ENCODE measurements at regions of chr15 and their contacts with region 1.

Region 1: GRCh38 chr15:72783563-72784237 is at the start of gene ADPGK:
- DNase-seq: peak; percentile 90 to 100 (median 97)
- ATAC-seq: peak; percentile 90
- H3K4me3 ChIP-seq: peak within 1 kb of the TSS; percentile 87
- H3K4me3 Mint-ChIP-seq: peak within 1 kb of the TSS; percentile 87 to 98 (median 95)
- H3K27ac ChIP-seq: peak within 1 kb of the TSS; percentile 89
- H3K27ac Mint-ChIP-seq: peak within 1 kb of the TSS; percentile 95 to 99 (median 98)
- H3K4me1 ChIP-seq: peaks cover 19 to 39% of the 10 kb centered on the region in 2 donors
- H3K4me1 Mint-ChIP-seq: peaks cover 31 to 56% (median 49%) of the 10 kb centered on the region in 7 donors
- H3K27me3 ChIP-seq: no peaks in the 10 kb centered on the region
- H3K27me3 Mint-ChIP-seq: no peaks in the 10 kb centered on the region
- total RNA-seq, gene ADPGK: 96.2 to 129 (median 98.2) TPM

Region 2: DNA sequence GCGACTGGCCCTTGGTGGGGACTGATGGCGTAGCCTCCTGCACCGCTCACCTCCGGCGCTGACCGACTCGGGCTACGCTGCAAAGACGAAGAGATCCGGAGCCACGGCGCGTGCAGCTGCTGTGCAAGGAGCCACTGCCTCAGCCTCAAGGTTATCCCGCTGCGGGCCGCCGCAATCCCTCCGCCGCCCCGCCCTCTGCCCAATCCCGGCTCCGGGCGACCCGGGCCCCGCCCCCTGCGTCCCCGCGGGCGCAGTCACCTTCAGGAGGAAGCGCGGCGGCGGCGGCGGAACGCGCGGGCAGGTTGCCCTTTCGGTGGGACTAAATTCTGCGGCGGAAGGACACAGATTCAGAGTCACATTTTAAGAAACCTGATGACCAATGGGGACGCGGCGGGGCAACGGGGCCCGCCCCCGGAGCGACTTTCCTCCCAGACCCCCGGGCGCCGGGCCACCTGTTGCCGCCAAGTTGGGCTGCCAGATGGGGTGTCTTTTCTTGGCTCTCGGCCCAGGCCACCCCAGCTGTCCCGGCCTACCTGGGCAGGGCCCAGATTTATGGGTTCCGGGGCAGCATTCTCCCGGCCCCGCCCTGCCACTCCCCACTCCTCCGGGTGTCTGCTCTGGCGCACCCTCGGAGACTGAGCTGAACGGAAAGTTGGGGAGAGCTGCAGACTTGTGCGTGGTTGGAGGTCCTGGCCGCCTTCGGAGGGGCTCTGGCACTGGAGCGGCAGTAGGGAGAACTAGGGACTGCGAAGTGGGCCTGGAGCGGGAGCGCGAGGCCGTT is 552.4 kb before region 1 on chr15 and contains the start of gene PKM:
- CTCF ChIA-PET with region 1: no interaction called
- POLR2A ChIA-PET with region 1: no interaction called
- intact Hi-C with region 1: loop called (anchors 2 kb)
- DNase-seq: peak; percentile 82 to 99 (median 88)
- ATAC-seq: peak; percentile 65
- H3K4me3 ChIP-seq: peak within 1 kb of the TSS; percentile 73
- H3K4me3 Mint-ChIP-seq: peak within 1 kb of the TSS; percentile 95 to 100 (median 99)
- H3K27ac ChIP-seq: peak within 1 kb of the TSS; percentile 73
- H3K27ac Mint-ChIP-seq: peak within 1 kb of the TSS; percentile 89 to 99 (median 95)
- H3K4me1 ChIP-seq: peaks cover 34 to 39% of the 10 kb centered on the region in 2 donors
- H3K4me1 Mint-ChIP-seq: peaks cover 40 to 55% (median 50%) of the 10 kb centered on the region in 7 donors
- H3K27me3 ChIP-seq: no peaks in the 10 kb centered on the region
- H3K27me3 Mint-ChIP-seq: peaks cover 0 to 3% (median 0%) of the 10 kb centered on the region in 5 donors
- total RNA-seq, gene PKM: 237 to 1,627 (median 329) TPM

Region 3: GRCh38 chr15:72375847-72376581 is 407.7 kb before region 1 on chr15 and contains the start of gene HEXA:
- CTCF ChIA-PET with region 1: no interaction called
- POLR2A ChIA-PET with region 1: no interaction called
- intact Hi-C with region 1: loop called (anchors 2 to 5 kb)
- DNase-seq: peak; percentile 91 to 99 (median 95)
- ATAC-seq: peak; percentile 93
- H3K4me3 ChIP-seq: peak within 1 kb of the TSS; percentile 99
- H3K4me3 Mint-ChIP-seq: peak within 1 kb of the TSS; percentile 87 to 96 (median 93)
- H3K27ac ChIP-seq: peak within 1 kb of the TSS; percentile 75
- H3K27ac Mint-ChIP-seq: peak within 1 kb of the TSS; percentile 94 to 100 (median 96)
- H3K4me1 ChIP-seq: peaks cover 21 to 39% of the 10 kb centered on the region in 2 donors
- H3K4me1 Mint-ChIP-seq: peaks cover 39 to 85% (median 64%) of the 10 kb centered on the region in 7 donors
- H3K27me3 ChIP-seq: no peaks in the 10 kb centered on the region
- H3K27me3 Mint-ChIP-seq: no peaks in the 10 kb centered on the region
- total RNA-seq, gene HEXA: 83.1 to 101 (median 94.8) TPM

Region 4: DNA sequence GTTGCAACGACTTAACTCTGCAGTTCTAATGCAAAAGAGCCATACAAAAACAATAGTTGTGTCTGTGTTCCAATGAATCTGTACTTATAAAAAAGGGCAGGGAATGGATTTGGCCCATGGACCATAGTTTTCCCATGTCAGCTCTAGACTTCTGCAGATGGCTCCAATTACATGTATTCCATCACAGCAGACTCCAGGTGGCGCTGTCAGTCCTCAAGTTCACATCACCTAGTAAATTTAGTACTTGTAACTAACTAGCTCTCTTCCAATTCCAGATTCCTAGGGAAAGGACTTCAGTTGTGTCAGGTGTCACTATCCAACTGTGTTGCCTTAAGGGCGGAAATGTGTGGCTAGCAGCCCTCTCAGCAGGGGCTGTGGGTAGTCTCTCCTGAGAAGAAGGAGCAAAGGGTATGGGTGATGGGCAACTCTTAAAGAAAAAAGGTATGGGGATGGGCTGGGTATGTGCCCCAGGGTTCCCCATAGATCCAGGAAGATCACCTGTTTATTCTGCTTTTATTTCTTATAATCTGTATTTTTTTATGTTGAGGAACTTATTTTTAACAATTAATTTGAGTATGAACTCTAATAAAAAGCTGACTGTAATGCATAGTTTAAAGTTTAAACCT is 61.5 kb before region 1 on chr15:
- CTCF ChIA-PET with region 1: interaction called, 3 read pairs
- POLR2A ChIA-PET with region 1: no interaction called
- intact Hi-C with region 1: loop called (anchors 1 kb)
- DNase-seq: peak; percentile 26 to 67 (median 54)
- ATAC-seq: peak; percentile 65
- H3K4me3 ChIP-seq: no peak overlapping the region
- H3K4me3 Mint-ChIP-seq: no peak overlapping the region
- H3K27ac ChIP-seq: no peak overlapping the region
- H3K27ac Mint-ChIP-seq: peak overlapping the region in 1 of 9 donors; percentile 21
- H3K4me1 ChIP-seq: no peaks in the 10 kb centered on the region
- H3K4me1 Mint-ChIP-seq: peaks cover 0 to 3% (median 0%) of the 10 kb centered on the region in 7 donors
- H3K27me3 ChIP-seq: no peaks in the 10 kb centered on the region
- H3K27me3 Mint-ChIP-seq: no peaks in the 10 kb centered on the region

Region 5: GRCh38 chr15:73081321-73081958 is 297.7 kb after region 1 on chr15:
- CTCF ChIA-PET with region 1: no interaction called
- POLR2A ChIA-PET with region 1: no interaction called
- intact Hi-C with region 1: loop called (anchors 1 to 5 kb)
- DNase-seq: peak in 7 of 9 donors; percentile 16 to 56 (median 38)
- ATAC-seq: peak; percentile 63
- H3K4me3 ChIP-seq: no peak overlapping the region
- H3K4me3 Mint-ChIP-seq: no peak overlapping the region
- H3K27ac ChIP-seq: no peak overlapping the region
- H3K27ac Mint-ChIP-seq: no peak overlapping the region
- H3K4me1 ChIP-seq: no peaks in the 10 kb centered on the region
- H3K4me1 Mint-ChIP-seq: peaks cover 0 to 3% (median 0%) of the 10 kb centered on the region in 7 donors
- H3K27me3 ChIP-seq: no peaks in the 10 kb centered on the region
- H3K27me3 Mint-ChIP-seq: peaks cover 0 to 7% (median 0%) of the 10 kb centered on the region in 5 donors

Region 6: DNA sequence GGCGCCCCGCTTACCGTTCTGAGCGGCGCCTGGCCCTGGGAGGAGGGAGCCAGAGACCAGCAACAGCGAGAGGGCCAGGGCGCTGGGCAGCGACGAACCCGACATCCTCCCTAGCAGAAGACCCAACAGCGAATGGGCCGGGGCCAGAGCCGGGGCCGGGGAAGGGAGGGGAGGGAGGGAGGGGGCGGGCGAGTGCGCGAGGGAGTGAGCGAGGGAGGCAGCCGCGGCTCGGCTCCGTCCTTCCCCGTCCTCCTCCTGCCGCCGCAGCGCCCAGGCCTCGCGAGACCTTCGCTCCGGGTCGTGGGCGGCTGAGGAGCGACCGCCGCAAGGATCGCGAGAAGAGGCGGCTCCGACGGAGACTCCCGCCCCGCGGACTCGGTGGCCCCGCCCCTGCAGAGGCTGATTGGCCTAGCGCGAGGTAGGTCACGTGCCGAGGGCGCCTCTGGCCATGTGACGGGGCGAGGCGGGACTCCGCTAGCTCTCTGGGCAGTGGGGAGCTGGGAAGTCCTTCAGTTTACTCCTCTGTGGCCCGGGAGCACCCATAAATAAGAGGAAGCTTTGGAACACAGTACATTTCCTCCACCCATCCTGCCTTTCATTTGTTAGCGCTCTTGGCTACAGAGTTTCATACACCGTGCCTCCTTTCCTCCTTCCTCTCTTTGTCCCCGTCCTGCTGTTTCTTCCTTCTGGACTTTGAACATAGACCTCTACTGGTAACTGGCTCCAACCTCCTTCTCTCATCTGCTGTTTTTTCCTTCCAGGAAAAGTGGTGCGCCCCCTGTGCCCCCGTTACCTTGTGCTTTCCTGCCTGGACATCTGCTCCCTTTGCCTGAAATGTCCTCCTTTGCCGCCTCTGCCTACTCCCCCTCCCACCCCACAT is 849.7 kb after region 1 on chr15 and contains the start of gene NPTN:
- CTCF ChIA-PET with region 1: no interaction called
- POLR2A ChIA-PET with region 1: no interaction called
- intact Hi-C with region 1: loop called (anchors 2 kb)
- DNase-seq: peak; percentile 96 to 99 (median 97)
- ATAC-seq: peak; percentile 95
- H3K4me3 ChIP-seq: peak within 1 kb of the TSS; percentile 73
- H3K4me3 Mint-ChIP-seq: peak within 1 kb of the TSS; percentile 79 to 97 (median 90)
- H3K27ac ChIP-seq: peak within 1 kb of the TSS; percentile 74
- H3K27ac Mint-ChIP-seq: peak within 1 kb of the TSS; percentile 71 to 96 (median 85)
- H3K4me1 ChIP-seq: peaks cover 16 to 26% of the 10 kb centered on the region in 2 donors
- H3K4me1 Mint-ChIP-seq: peaks cover 33 to 59% (median 49%) of the 10 kb centered on the region in 7 donors
- H3K27me3 ChIP-seq: no peaks in the 10 kb centered on the region
- H3K27me3 Mint-ChIP-seq: peaks cover 5 to 25% (median 8%) of the 10 kb centered on the region in 5 donors
- total RNA-seq, gene NPTN: 26.8 to 48.2 (median 42.6) TPM

Region 7: DNA sequence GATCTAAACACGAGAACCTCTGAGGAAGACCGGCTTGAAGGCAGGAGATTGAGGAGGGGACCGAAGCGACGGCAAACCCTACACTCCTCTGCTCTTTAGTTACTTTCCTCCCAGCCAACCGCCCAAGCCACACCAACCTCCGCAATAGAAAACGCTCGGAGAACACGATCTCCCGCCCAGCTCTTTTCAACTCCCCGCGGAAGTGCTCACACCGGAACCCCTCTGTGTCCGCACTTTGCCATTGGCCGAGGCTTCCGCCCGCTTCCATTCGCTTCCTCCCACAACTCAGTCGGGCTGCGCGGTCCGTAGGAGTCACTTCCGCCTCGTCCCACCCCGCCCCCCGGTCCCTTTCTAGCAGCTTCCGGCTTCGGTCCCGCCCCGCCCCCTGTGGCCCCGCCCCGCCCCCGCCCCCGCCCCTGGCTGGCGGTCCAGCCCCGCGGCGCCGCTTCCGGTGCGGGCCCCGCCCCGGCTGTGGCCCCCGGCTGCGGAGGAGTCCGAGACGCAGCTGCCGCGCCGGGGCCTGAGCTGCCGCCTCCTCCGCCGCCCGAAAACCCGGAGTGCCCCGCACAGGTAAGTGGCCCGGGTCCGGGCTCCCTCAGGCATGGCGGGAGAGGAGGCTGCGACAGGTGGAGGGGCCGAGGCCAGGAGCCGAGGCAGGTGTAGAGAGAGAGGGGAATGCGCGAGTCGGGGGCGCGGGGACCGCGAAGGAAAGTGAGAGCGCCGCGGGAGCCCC is 1757.2 kb after region 1 on chr15 and contains the start of gene ARID3B:
- CTCF ChIA-PET with region 1: no interaction called
- POLR2A ChIA-PET with region 1: no interaction called
- intact Hi-C with region 1: loop called in 1 of 2 experiments (anchors 10 kb)
- DNase-seq: peak; percentile 72 to 95 (median 90)
- ATAC-seq: peak; percentile 94
- H3K4me3 ChIP-seq: peak within 1 kb of the TSS; percentile 98
- H3K4me3 Mint-ChIP-seq: peak within 1 kb of the TSS; percentile 90 to 99 (median 98)
- H3K27ac ChIP-seq: peak within 1 kb of the TSS; percentile 87
- H3K27ac Mint-ChIP-seq: peak within 1 kb of the TSS; percentile 84 to 99 (median 94)
- H3K4me1 ChIP-seq: peaks cover 18 to 34% of the 10 kb centered on the region in 2 donors
- H3K4me1 Mint-ChIP-seq: peaks cover 46 to 64% (median 55%) of the 10 kb centered on the region in 7 donors
- H3K27me3 ChIP-seq: no peaks in the 10 kb centered on the region
- H3K27me3 Mint-ChIP-seq: no peaks in the 10 kb centered on the region
- total RNA-seq, gene ARID3B: 29.5 to 45.4 (median 36.8) TPM